Activated naive CD4-positive, alpha-beta T cell treated with anti-CD3 and anti-CD28 coated beads for 36 hours (primary cell): ENCODE measurements at regions of chr14 and their contacts with region 1.

Region 1: GRCh38 chr14:61537563-61538463 is 157.5 kb upstream of the HIF1A start:
- DNase-seq: peak; percentile 79
- H3K4me3 Mint-ChIP-seq: no peak overlapping the region
- H3K27ac Mint-ChIP-seq: peak overlapping the region; percentile 92
- H3K4me1 Mint-ChIP-seq: peaks cover 84% of the 10 kb centered on the region
- H3K27me3 Mint-ChIP-seq: no peaks in the 10 kb centered on the region

Region 2: DNA sequence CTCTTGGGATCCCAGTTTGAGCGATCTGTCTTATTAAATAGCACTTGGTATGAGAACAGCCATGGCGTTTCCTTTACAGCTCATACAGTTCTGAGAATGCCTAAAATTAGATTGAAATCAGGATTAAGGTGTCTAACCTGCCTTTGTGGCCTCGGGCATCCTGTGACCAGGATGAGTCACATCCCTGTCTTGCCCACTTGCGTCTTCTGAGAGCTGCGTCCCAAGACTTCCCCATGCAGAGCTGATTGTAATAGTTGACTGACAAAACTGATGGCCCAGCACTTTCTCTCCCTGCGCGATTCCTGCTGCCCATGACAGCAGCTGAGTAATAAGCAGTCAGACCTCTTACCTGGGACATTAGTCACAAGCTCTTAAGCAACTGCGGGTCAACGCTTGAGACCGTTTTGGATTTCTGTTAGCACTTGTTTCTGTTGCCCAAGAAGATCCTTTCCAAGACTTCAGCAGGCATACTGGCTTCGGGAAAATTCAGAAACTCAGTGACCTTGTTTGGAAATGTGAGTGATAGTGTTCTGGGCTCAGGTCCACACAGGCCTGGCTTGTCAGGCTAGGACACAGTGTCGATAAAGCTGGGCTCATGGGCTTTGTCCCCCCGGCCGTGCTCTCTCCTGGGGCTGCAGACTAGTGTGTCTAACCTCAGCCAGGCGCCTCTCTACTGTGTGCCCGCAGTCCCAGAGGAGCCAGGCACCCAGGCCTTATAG is 12.4 kb before region 1 on chr14:
- CTCF ChIA-PET with region 1: interaction called, 5 read pairs
- intact Hi-C with region 1: loop called (anchors 1 kb)
- DNase-seq: peak; percentile 91
- H3K4me3 Mint-ChIP-seq: peak overlapping the region; percentile 22
- H3K27ac Mint-ChIP-seq: peak overlapping the region; percentile 94
- H3K4me1 Mint-ChIP-seq: peaks cover 84% of the 10 kb centered on the region
- H3K27me3 Mint-ChIP-seq: no peaks in the 10 kb centered on the region

Region 3: GRCh38 chr14:61561657-61562276 is 24.0 kb after region 1 on chr14:
- CTCF ChIA-PET with region 1: no interaction called
- intact Hi-C with region 1: loop called (anchors 1 kb)
- DNase-seq: no peak
- H3K4me3 Mint-ChIP-seq: no peak overlapping the region
- H3K27ac Mint-ChIP-seq: peak overlapping the region; percentile 75
- H3K4me1 Mint-ChIP-seq: peaks cover 73% of the 10 kb centered on the region
- H3K27me3 Mint-ChIP-seq: no peaks in the 10 kb centered on the region

Region 4: GRCh38 chr14:61568572-61569131 is 30.8 kb after region 1 on chr14:
- CTCF ChIA-PET with region 1: no interaction called
- intact Hi-C with region 1: loop called (anchors 1 kb)
- DNase-seq: peak; percentile 71
- H3K4me3 Mint-ChIP-seq: peak overlapping the region; percentile 73
- H3K27ac Mint-ChIP-seq: peak overlapping the region; percentile 91
- H3K4me1 Mint-ChIP-seq: peaks cover 87% of the 10 kb centered on the region
- H3K27me3 Mint-ChIP-seq: no peaks in the 10 kb centered on the region

Region 5: GRCh38 chr14:61698206-61698980 is 160.6 kb after region 1 on chr14:
- CTCF ChIA-PET with region 1: no interaction called
- intact Hi-C with region 1: no loop called
- DNase-seq: no peak
- H3K4me3 Mint-ChIP-seq: peak overlapping the region; percentile 94
- H3K27ac Mint-ChIP-seq: peak overlapping the region; percentile 93
- H3K4me1 Mint-ChIP-seq: peaks cover 39% of the 10 kb centered on the region
- H3K27me3 Mint-ChIP-seq: no peaks in the 10 kb centered on the region